Uterus (tissue), 4 donors: ENCODE measurements at regions of chr11 and their contacts with region 1.

Region 1: DNA sequence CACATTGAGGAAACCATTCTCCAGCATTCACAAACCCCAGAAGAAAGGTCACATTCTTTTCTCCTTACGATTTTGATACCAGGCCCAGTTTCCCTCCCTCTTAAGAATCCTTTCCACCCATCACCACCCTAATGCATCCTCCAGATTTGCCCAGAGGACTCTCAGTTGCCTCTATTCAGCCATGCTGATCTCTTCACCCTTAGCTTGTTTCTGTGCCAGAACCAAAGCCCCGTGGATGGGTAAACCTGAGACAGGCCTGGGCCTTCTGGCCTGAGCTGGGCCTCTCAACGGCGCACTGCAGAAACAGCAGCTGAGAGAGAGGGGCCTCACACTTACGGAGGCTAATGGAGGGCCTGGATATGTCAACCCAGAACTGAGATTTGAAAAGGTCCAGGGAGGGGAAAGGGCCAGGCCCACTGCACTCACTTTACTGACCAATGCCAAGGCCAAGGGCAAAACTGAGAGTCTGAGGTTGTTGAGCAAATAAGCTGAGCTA is 32.2 kb upstream of the OAF start:
- DNase-seq: peak in 1 of 2 donors; percentile 13
- H3K4me3 ChIP-seq: no peak overlapping the region
- H3K27ac ChIP-seq: peak overlapping the region; percentile 45 to 73
- H3K4me1 ChIP-seq: no peaks in the 10 kb centered on the region
- H3K27me3 ChIP-seq: no peaks in the 10 kb centered on the region
- CTCF ChIP-seq: no peak
- POLR2A ChIP-seq: no peak

Region 2: GRCh38 chr11:120137611-120138521 is 40.7 kb before region 1 on chr11 and contains the start of gene TRIM29:
- intact Hi-C with region 1: no loop called
- DNase-seq: peak in 1 of 2 donors; percentile 12
- H3K4me3 ChIP-seq: no peak within 1 kb of the TSS
- H3K27ac ChIP-seq: no peak within 1 kb of the TSS
- H3K4me1 ChIP-seq: no peaks in the 10 kb centered on the region
- H3K27me3 ChIP-seq: no peaks in the 10 kb centered on the region
- CTCF ChIP-seq: no peak
- POLR2A ChIP-seq: no peak
- total RNA-seq, gene TRIM29: 4.6 to 7.6 (median 6.1) TPM

Region 3: GRCh38 chr11:120229451-120230424 is 51.1 kb after region 1 on chr11:
- intact Hi-C with region 1: loop called (anchors 5 kb)
- DNase-seq: no peak
- H3K4me3 ChIP-seq: no peak overlapping the region
- H3K27ac ChIP-seq: peak overlapping the region; percentile 1 to 25
- H3K4me1 ChIP-seq: peaks cover 0 to 7% of the 10 kb centered on the region in 2 donors
- H3K27me3 ChIP-seq: no peaks in the 10 kb centered on the region
- CTCF ChIP-seq: peak; percentile 64 to 82 (median 70)
- POLR2A ChIP-seq: no peak